Testis (tissue), 5 donors: ENCODE measurements at regions of chr1 and their contacts with region 1.

Region 1: DNA sequence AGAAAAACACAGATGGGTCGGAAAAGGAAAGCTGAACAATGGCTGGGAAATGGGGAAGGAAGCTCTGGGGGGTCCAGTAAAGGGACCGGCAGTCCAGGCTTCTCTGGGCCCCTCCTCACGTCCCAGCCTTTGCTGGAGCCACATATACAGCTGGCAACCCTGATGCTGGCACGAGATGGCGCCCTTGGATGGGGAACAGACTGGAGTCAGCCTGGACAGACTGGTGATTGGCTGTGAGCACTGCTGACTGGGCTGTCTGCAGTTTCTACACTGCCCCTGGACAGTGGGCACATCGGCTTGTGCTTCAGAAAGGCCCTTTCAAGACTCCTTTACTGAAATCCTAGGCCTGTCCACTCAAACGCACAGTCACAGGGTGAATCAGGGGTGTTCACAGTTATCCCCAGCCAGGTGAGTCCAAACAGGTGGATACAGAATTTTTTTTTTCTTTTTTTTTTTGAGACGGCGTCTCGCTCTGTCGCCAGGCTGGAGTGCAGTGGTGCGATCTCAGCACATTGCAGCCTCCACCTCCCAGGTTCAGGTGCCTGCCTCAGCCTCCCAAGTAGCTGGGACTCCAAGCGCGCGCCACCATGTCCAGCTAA is 31.1 kb upstream of the ZBTB40 start:
- DNase-seq: peak; percentile 91
- H3K4me3 ChIP-seq: no peak overlapping the region
- H3K27ac ChIP-seq: no peak overlapping the region
- H3K4me1 ChIP-seq: no peaks in the 10 kb centered on the region
- H3K27me3 ChIP-seq: no peaks in the 10 kb centered on the region
- CTCF ChIP-seq: peak; percentile 37 to 62 (median 47)
- POLR2A ChIP-seq: no peak

Region 2: GRCh38 chr1:21799730-21800129 is 620.8 kb before region 1 on chr1:
- intact Hi-C with region 1: no loop called
- DNase-seq: no peak
- H3K4me3 ChIP-seq: no peak overlapping the region
- H3K27ac ChIP-seq: no peak overlapping the region
- H3K4me1 ChIP-seq: no peaks in the 10 kb centered on the region
- H3K27me3 ChIP-seq: no peaks in the 10 kb centered on the region
- CTCF ChIP-seq: no peak
- POLR2A ChIP-seq: no peak

Region 3: DNA sequence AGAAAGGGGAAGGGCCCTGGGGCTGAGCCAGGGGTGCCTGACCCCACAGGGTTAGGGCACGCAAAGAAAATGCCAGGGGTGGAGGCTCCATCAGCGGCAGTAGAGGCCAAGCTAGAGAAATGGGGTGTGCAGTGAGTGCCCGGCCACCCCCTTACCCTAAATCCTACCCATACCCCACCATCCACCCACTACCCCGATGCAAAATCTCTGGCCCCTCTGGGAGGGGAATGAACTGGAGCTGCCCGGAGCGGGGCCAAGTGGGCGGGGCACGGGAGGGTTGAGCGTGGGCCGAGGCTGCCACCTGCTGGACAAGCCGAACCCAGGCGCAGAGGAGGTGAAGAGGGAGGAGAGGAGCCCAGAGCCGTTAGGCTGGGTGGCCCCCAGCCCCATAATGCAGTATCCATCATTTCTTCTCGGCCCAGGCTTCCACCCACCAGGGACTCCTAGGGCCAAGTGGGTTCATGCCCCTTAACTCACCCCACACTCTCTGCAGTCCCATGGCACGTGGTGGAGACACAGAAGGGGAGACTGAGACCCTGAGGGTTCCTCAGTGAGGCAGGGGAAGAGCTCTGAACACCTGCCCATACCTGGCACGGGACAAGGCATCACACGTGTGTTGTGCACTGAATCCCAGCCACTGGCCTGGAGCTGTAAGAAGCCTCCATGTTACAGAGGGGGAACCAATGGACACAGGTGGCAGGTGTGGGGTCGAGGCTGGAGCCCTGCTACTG is 221.5 kb after region 1 on chr1:
- intact Hi-C with region 1: loop called (anchors 5 kb)
- DNase-seq: peak; percentile 85
- H3K4me3 ChIP-seq: no peak overlapping the region
- H3K27ac ChIP-seq: no peak overlapping the region
- H3K4me1 ChIP-seq: no peaks in the 10 kb centered on the region
- H3K27me3 ChIP-seq: no peaks in the 10 kb centered on the region
- CTCF ChIP-seq: peak; percentile 81 to 86 (median 84)
- POLR2A ChIP-seq: no peak